Panc1 (cell line): ENCODE measurements at regions of chr1 and their contacts with region 1.

Region 1: DNA sequence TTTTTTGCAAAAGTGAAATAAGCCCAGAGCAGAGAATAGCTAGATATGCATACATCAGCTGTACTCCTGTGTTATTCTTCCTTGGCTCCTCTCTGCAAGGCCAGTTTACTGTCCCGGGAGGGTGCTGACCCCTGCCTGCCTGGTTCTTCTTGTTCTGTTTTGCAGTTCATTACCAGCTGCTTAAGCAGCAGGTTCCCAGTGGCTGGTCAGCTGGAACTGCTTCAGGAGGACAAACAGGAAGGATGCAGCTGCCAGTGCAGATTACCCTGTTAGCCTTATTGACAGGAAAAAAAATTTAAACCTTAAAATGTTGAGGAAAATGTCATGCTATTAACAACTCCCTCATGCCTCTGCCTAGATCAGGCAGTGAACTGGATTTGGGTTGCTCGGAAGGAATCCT is 16.0 kb upstream of the LRIG2 start:
- DNase-seq: no peak
- ATAC-seq: no peak
- H3K4me3 ChIP-seq: no peak overlapping the region
- H3K27ac ChIP-seq: no peak overlapping the region
- H3K4me1 ChIP-seq: no peaks in the 10 kb centered on the region
- H3K27me3 ChIP-seq: no peaks in the 10 kb centered on the region
- CTCF ChIP-seq: no peak

Region 2: DNA sequence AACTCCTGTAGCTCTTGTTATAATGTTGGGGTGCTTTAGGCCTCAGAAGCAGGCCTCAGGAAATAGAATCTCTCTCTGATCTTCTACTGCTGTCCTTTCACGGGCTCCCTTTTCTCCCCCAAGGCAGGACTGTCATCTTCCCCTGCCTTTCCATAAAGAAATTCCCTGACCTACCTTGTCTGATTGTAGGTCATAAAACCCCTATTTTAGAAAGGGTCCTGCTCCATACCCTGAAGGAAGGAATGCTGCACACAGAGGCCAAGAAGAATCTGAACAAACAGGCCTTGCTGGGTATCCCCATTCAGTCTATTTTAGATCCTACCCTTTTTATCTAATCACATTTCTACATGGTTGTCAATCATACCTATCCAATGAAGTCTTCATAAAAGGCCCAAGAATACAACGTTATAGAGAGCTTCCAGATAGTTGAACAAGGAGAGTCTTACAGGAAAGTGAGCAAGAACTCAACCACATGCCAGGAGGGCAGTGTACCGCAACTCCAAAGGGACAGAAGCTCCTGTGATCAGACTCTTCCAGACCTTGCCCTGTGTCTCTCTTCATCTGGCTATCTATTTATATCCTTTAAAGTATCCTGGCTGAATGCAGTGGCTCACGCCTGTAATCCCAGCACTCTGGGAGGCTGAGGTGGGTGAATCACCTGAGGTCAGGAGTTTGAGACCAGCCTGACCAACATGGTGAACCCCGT is 194.1 kb before region 1 on chr1:
- CTCF ChIA-PET with region 1: no interaction called
- POLR2A ChIA-PET with region 1: interaction called, 13 read pairs
- in situ Hi-C with region 1: no loop called
- intact Hi-C with region 1: no loop called
- DNase-seq: no peak
- ATAC-seq: no peak
- H3K4me3 ChIP-seq: no peak overlapping the region
- H3K27ac ChIP-seq: no peak overlapping the region
- H3K4me1 ChIP-seq: no peaks in the 10 kb centered on the region
- H3K27me3 ChIP-seq: no peaks in the 10 kb centered on the region
- CTCF ChIP-seq: no peak